ENCODE measurements at regions of chr4 and their contacts with region 1.

Region 1: DNA sequence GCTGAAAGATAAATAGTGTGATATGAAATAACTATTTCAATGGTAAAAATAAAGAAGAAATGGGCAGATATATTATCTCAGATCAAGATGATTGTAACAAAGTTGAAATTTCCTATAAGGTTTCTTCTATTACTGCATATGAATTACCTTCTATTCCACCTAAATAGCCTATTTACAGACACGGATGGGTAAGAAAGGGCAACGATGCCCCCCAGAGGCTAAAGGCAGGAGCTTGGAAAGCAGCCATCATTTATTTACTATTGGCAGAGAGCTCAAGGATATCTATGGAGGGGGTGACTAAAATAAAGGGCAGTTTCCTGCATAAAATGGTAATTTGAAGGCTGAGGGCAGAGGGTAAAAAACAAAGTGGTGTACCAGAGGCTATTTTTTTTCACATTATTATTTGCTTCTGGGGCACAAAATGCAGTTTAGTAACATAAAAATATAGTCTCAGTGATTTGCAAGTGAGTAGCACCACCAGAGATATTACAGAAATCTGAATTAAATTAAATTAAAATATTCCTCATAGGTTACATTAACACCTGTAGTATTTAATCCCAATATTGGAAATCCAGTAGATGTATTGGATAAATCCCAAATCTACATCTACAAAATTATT is 123.1 kb downstream of the BTC start:
- DNase-seq: peak; percentile 46 to 72
- H3K4me3 ChIP-seq: no peak overlapping the region
- H3K27ac ChIP-seq: no peak overlapping the region
- H3K4me1 ChIP-seq: peaks cover 0 to 11% (median 3%) of the 10 kb centered on the region in 4 donors
- H3K27me3 ChIP-seq: no peaks in the 10 kb centered on the region
- CTCF ChIP-seq: peak in 3 of 7 experiments; percentile 34 to 48 (median 36)
- EP300 ChIP-seq: no peak
- POLR2A ChIP-seq: no peak

Region 2: GRCh38 chr4:74376888-74377483 is 294.2 kb before region 1 on chr4:
- intact Hi-C with region 1: loop called (anchors 5 kb)
- DNase-seq: peak in 1 of 2 donors; percentile 78
- H3K4me3 ChIP-seq: no peak overlapping the region
- H3K27ac ChIP-seq: peak overlapping the region in 2 of 5 donors; percentile 63 to 73
- H3K4me1 ChIP-seq: peaks cover 0 to 11% (median 3%) of the 10 kb centered on the region in 4 donors
- H3K27me3 ChIP-seq: no peaks in the 10 kb centered on the region
- CTCF ChIP-seq: peak in 4 of 7 experiments; percentile 26 to 71 (median 54)
- EP300 ChIP-seq: no peak
- POLR2A ChIP-seq: no peak

Region 3: GRCh38 chr4:74754218-74754617 is 83.0 kb after region 1 on chr4:
- intact Hi-C with region 1: no loop called
- DNase-seq: no peak
- H3K4me3 ChIP-seq: no peak overlapping the region
- H3K27ac ChIP-seq: no peak overlapping the region
- H3K4me1 ChIP-seq: peaks cover 0 to 32% (median 9%) of the 10 kb centered on the region in 4 donors
- H3K27me3 ChIP-seq: no peaks in the 10 kb centered on the region
- CTCF ChIP-seq: no peak
- EP300 ChIP-seq: no peak
- POLR2A ChIP-seq: no peak

Measured in stomach (tissue), 19 donors.